PC-3 (cell line): ENCODE measurements at regions of chr10 and their contacts with region 1.

Region 1: DNA sequence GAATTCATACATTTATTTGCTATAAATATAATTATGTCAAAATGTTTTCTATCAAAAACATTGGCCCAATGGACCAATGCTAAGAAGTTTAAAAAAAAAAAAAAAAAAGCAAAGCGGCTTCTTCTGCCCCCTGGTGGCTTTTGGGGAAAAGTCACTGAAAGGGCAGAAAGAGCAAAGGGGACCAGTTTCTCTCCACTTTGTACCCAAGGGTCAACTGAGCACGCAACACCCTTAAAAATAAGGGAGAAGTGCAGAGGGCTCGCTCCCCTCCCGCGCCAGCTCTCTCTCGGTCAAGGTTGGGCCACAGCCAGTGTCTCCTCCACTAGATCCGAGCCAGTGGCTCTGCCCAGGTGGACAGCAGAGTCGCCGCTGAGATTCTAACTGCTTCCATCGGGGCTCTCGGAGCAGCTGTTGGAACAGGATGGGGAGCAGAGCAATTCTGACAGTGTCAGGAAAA is 136.4 kb upstream of the FGFR2 start:
- DNase-seq: peak; percentile 37
- ATAC-seq: 0 out of 2 replicates have a peak, but pooled peaks have one; percentile 29
- H3K4me3 ChIP-seq: 0 out of 2 replicates have a peak overlapping the region, but pooled peaks have one; percentile 21
- H3K27ac ChIP-seq: no peak overlapping the region
- H3K4me1 ChIP-seq: no peaks in the 10 kb centered on the region
- H3K27me3 ChIP-seq: no peaks in the 10 kb centered on the region
- CTCF ChIP-seq: peak; percentile 69

Region 2: GRCh38 chr10:120942806-120943413 is 791.7 kb before region 1 on chr10:
- CTCF ChIA-PET with region 1: no interaction called
- POLR2A ChIA-PET with region 1: no interaction called
- intact Hi-C with region 1: loop called (anchors 1 kb)
- DNase-seq: peak; percentile 71
- ATAC-seq: peak; percentile 98
- H3K4me3 ChIP-seq: no peak overlapping the region
- H3K27ac ChIP-seq: no peak overlapping the region
- H3K4me1 ChIP-seq: no peaks in the 10 kb centered on the region
- H3K27me3 ChIP-seq: no peaks in the 10 kb centered on the region
- CTCF ChIP-seq: peak; percentile 81

Region 3: DNA sequence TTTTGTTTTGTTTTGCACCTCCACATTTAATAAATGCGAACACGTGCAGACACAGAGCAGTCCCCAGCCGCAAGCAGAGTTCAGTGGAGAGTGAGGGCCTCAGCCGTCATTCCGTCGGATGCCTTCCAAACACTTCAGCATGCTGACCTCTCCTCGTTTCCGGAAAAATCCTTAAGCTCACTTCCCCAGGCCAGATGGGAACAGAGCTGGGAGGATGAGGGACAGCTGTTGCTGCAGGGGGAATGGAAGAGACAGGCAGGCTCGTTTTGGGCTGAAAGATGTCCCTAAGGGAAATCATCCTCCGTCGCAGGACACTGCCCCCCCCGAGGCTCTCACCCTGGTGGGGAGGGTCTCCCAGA is 119.2 kb before region 1 on chr10:
- CTCF ChIA-PET with region 1: no interaction called
- POLR2A ChIA-PET with region 1: no interaction called
- intact Hi-C with region 1: loop called (anchors 10 kb)
- DNase-seq: no peak
- ATAC-seq: no peak
- H3K4me3 ChIP-seq: no peak overlapping the region
- H3K27ac ChIP-seq: no peak overlapping the region
- H3K4me1 ChIP-seq: no peaks in the 10 kb centered on the region
- H3K27me3 ChIP-seq: 0 out of 2 replicates have a peak, but pooled peaks cover 3% of the 10 kb centered on the region
- CTCF ChIP-seq: no peak